Naive thymus-derived CD4-positive, alpha-beta T cell (primary cell): ENCODE measurements at regions of chr2 and their contacts with region 1.

Region 1: GRCh38 chr2:176001916-176002687 is at the start of gene LNPK:
- DNase-seq: peak; percentile 82 to 93 (median 91)
- ATAC-seq: peak; percentile 94
- H3K4me3 ChIP-seq: peak within 1 kb of the TSS; percentile 84
- H3K4me3 Mint-ChIP-seq: peak within 1 kb of the TSS; percentile 89 to 96 (median 92)
- H3K27ac ChIP-seq: peak within 1 kb of the TSS; percentile 75
- H3K27ac Mint-ChIP-seq: peak within 1 kb of the TSS; percentile 79 to 99 (median 92)
- H3K4me1 ChIP-seq: peaks cover 11 to 16% of the 10 kb centered on the region in 2 donors
- H3K4me1 Mint-ChIP-seq: peaks cover 18 to 35% (median 31%) of the 10 kb centered on the region in 7 donors
- H3K27me3 ChIP-seq: no peaks in the 10 kb centered on the region
- H3K27me3 Mint-ChIP-seq: peaks cover 0 to 9% (median 0%) of the 10 kb centered on the region in 5 donors
- total RNA-seq, gene LNPK: 19.4 to 36.8 (median 24.0) TPM

Region 2: DNA sequence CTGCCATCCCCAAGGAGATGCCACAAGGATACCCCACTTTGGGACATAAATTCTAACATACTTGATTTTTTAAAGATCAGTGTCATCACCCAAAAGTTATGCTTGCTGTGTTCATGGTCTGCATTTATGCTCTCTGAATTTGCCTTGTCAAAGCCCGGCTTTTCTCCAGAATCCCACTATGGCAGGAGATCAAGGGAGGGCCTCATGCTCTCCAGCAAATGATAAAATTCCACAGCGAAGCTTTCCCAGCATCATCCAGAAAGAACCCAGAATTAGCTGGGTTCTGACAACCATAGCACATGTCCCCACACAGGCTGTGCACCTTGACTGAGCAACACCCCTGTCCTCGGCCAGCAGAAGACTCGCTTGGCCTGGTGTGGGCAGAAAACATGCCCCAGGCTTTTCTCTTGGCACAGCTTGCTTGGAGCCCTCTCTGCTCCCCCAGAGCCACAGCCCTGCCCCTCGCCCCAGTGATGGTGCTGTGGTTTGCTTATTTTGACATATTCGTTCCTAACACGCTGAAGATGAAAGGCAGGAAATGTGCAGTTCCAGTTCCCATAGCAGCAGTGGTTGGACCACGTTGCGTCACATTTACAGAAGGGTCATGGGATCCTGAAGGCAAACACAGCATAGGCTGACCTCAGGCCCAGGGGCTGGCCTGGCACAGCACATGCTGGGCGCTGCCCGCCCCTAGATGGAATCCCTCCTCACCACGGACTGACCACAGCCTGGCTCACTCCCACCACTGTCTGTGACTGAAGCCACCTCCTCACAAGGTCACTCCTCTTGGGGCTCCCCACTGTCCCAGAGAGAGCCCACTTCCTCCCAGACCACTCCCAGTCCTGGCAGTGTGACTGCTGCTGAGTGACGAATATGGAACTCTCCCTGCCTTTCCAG is 1223.8 kb before region 1 on chr2:
- CTCF ChIA-PET with region 1: no interaction called
- POLR2A ChIA-PET with region 1: no interaction called
- intact Hi-C with region 1: loop called in 1 of 2 experiments (anchors 2 kb)
- DNase-seq: peak; percentile 51 to 93 (median 91)
- ATAC-seq: peak; percentile 93
- H3K4me3 ChIP-seq: peak overlapping the region; percentile 3
- H3K4me3 Mint-ChIP-seq: peak overlapping the region; percentile 53 to 84 (median 72)
- H3K27ac ChIP-seq: peak overlapping the region; percentile 61
- H3K27ac Mint-ChIP-seq: peak overlapping the region; percentile 55 to 97 (median 95)
- H3K4me1 ChIP-seq: peaks cover 28 to 39% of the 10 kb centered on the region in 2 donors
- H3K4me1 Mint-ChIP-seq: peaks cover 34 to 60% (median 46%) of the 10 kb centered on the region in 7 donors
- H3K27me3 ChIP-seq: no peaks in the 10 kb centered on the region
- H3K27me3 Mint-ChIP-seq: no peaks in the 10 kb centered on the region

Region 3: GRCh38 chr2:174901075-174901474 is 1101.0 kb before region 1 on chr2:
- CTCF ChIA-PET with region 1: no interaction called
- POLR2A ChIA-PET with region 1: no interaction called
- intact Hi-C with region 1: no loop called
- DNase-seq: peak in 8 of 9 donors; percentile 8 to 42 (median 26)
- ATAC-seq: peak; percentile 33
- H3K4me3 ChIP-seq: no peak overlapping the region
- H3K4me3 Mint-ChIP-seq: peak overlapping the region; percentile 1 to 95 (median 78)
- H3K27ac ChIP-seq: peak overlapping the region; percentile 76
- H3K27ac Mint-ChIP-seq: peak overlapping the region; percentile 76 to 97 (median 93)
- H3K4me1 ChIP-seq: peaks cover 0 to 17% of the 10 kb centered on the region in 2 donors
- H3K4me1 Mint-ChIP-seq: peaks cover 6 to 45% (median 29%) of the 10 kb centered on the region in 7 donors
- H3K27me3 ChIP-seq: no peaks in the 10 kb centered on the region
- H3K27me3 Mint-ChIP-seq: no peaks in the 10 kb centered on the region

Region 4: DNA sequence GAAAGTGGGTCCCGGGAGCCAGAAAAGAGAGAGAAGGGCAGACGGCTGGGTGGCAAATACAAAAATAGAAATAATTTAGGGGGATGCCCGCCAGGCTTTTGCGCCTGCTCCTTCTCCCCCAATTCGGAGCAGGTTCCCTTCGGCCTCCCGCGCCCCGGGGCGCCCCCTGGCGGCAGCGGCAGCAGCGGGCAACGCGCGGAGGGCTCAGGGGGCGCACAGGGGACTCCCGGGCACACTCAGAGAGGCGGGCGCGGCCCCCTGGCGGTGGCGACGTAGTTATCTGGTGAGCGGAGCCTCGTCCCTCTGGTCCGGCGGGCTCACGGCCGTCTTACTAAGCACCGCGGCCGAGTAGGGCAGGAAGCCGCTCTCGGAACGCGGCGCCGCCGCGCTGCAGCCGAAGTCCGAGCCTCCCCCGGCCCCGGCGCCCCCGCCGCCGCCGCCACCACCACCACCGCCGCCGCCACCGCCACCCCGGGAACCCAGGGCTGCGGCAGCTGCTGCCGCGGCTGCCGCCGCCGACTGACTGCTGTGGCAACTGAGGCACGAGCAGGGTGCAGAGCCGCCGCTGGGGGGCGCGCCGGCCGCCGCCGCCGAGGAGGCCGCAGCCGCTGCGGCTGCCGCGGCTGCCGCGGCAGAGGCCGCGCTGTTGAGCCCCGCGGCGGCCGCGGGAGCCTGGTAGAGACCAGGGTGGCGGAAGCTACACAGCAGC is 77.9 kb after region 1 on chr2:
- CTCF ChIA-PET with region 1: no interaction called
- POLR2A ChIA-PET with region 1: no interaction called
- intact Hi-C with region 1: loop called in 1 of 2 experiments (anchors 2 kb)
- DNase-seq: no peak
- ATAC-seq: peak; percentile 48
- H3K4me3 ChIP-seq: no peak overlapping the region
- H3K4me3 Mint-ChIP-seq: peak overlapping the region; percentile 64 to 82 (median 76)
- H3K27ac ChIP-seq: no peak overlapping the region
- H3K27ac Mint-ChIP-seq: peak overlapping the region in 6 of 9 donors; percentile 58 to 98 (median 90)
- H3K4me1 ChIP-seq: peaks cover 0 to 7% of the 10 kb centered on the region in 2 donors
- H3K4me1 Mint-ChIP-seq: peaks cover 0 to 29% (median 15%) of the 10 kb centered on the region in 7 donors
- H3K27me3 ChIP-seq: peaks cover 41 to 79% of the 10 kb centered on the region in 2 donors
- H3K27me3 Mint-ChIP-seq: peaks cover 67 to 83% (median 80%) of the 10 kb centered on the region in 5 donors

Region 5: DNA sequence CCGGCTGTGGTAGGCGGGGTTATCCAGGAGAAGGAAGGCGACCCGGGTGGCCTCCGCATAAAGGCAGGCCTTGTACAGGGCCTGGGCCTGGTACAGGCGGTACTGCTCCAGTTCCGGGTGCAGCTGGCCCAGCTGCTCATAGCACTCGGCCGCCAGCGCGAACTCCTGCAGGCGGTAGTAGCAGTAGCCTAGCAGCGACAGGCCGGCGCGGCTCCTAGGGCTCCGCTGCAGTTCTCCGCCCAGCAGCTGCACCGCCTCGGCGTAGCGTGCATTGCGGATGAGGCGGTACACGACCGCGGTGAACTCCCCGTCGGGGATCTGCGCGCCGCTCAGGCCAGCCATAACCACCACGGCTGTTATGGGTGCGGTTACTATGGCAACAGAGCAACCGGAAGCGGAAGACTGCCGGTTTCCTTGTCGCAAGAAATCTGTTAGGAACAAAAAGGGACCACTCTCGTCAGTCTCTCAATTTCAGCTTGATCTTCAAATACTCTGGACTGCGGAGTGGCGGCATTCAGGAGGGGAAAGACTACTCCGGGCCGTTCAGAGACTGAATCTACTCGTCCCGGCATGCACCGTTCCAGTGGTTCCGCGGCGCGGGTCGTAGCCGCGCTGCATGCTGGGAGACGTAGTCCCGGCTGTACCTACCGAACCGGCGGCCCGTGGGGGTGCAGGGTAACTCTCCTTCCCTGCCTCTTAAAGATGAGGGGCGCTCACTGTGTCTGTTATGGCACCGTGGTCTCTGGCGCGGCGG is 1550.5 kb after region 1 on chr2:
- CTCF ChIA-PET with region 1: no interaction called
- POLR2A ChIA-PET with region 1: no interaction called
- intact Hi-C with region 1: loop called in 1 of 2 experiments (anchors 2 kb)
- DNase-seq: peak; percentile 82 to 96 (median 94)
- ATAC-seq: peak; percentile 94
- H3K4me3 ChIP-seq: peak overlapping the region; percentile 89
- H3K4me3 Mint-ChIP-seq: peak overlapping the region; percentile 87 to 99 (median 94)
- H3K27ac ChIP-seq: peak overlapping the region; percentile 100
- H3K27ac Mint-ChIP-seq: peak overlapping the region; percentile 98 to 100 (median 99)
- H3K4me1 ChIP-seq: no peaks in the 10 kb centered on the region
- H3K4me1 Mint-ChIP-seq: peaks cover 4 to 29% (median 14%) of the 10 kb centered on the region in 7 donors
- H3K27me3 ChIP-seq: no peaks in the 10 kb centered on the region
- H3K27me3 Mint-ChIP-seq: peaks cover 0 to 14% (median 4%) of the 10 kb centered on the region in 5 donors